ENCODE measurements at regions of chr7 and their contacts with region 1.

Region 1: DNA sequence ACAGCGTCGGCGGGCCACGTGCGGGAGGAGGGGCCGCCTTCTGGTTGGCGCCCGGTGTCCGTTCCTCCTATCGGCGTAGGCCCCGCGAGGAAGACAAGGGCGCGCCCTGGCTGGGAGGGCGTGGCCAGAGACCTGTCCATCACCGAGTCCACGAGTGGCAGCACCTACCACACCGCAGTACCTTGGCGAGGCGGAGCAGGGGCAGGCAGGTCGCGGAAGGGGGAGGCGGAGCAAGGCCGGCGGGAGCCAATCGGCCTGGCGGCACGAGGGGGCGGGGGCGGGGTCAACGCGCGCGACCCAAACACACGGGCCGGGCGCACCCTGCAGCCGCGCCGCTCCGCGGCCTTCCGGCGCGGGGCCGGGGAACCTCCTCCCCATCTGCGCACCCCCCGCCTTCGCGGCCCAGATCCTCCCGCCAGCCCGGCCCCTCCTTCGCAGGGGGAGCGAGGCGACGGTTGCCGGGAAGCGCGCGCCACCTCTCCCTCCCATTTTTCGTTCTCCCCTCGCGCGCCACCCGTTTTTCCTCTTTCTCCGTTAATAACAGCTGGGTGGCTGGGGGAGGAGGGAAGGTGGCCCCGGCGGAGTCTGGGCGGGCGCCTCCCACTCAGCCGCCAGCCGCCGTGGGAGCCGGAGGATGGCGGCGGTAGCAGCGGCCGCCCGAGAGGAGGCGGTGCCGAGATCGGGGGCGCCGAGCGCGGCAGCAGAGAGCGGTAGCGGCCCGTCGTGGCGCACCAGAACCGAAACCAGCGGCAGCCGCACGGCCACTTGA is at the start of gene ZNRF2:
- DNase-seq: peak; percentile 99
- H3K4me3 ChIP-seq: peak within 1 kb of the TSS; percentile 54 to 91 (median 59)
- H3K27ac ChIP-seq: peak within 1 kb of the TSS; percentile 93
- H3K4me1 ChIP-seq: peaks cover 9% of the 10 kb centered on the region
- H3K27me3 ChIP-seq: no peaks in the 10 kb centered on the region
- CTCF ChIP-seq: peak in 1 of 2 donors; percentile 46
- total RNA-seq, gene ZNRF2: 13.1 to 32.3 TPM

Region 2: GRCh38 chr7:30026229-30027064 is 258.0 kb before region 1 on chr7 and contains the start of gene FKBP14:
- CTCF ChIA-PET with region 1: no interaction called
- dilution Hi-C with region 1: no loop called
- in situ Hi-C with region 1: no loop called
- intact Hi-C with region 1: loop called (anchors 5 kb)
- DNase-seq: peak; percentile 99
- H3K4me3 ChIP-seq: peak within 1 kb of the TSS; percentile 79 to 84 (median 83)
- H3K27ac ChIP-seq: peak within 1 kb of the TSS; percentile 81
- H3K4me1 ChIP-seq: peaks cover 18% of the 10 kb centered on the region
- H3K27me3 ChIP-seq: no peaks in the 10 kb centered on the region
- CTCF ChIP-seq: no peak
- total RNA-seq, gene FKBP14: 29.7 to 37.4 TPM

Region 3: DNA sequence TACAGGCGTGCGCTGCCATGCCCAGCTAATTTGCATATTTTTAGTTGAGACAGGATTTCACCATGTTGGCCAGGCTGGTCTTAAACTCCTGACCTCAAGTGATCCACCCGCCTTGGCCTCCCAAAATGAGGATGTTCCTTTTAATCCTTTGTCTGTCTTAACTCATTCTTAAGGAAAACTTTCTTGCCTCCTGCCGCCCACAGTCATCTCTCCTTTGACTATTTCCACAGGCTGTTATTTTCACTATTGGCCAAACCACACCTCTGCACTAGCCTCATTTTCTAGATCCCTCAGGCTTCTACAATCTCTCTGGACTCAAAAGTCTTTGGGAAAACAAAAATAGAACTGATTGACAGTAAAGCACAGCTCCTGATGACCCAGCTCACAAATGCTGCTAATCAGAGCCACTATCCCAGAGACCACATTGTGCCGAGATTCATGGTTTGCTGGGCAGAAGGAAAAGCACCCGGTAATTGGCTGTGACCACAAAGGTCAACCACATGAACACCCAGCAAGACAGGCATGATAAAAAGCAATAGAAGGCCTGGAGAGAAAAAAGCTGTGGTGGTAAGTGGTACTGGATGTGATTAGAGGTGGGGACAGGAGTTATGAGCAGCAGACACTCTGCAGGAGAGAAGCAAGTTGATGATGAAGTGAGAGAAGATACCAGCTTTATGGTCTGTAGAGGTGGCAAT is 44.2 kb before region 1 on chr7:
- CTCF ChIA-PET with region 1: interaction called, 3 read pairs
- dilution Hi-C with region 1: no loop called
- in situ Hi-C with region 1: no loop called
- intact Hi-C with region 1: loop called (anchors 2 kb)
- DNase-seq: peak; percentile 61
- H3K4me3 ChIP-seq: no peak overlapping the region
- H3K27ac ChIP-seq: no peak overlapping the region
- H3K4me1 ChIP-seq: peaks cover 37% of the 10 kb centered on the region
- H3K27me3 ChIP-seq: no peaks in the 10 kb centered on the region
- CTCF ChIP-seq: no peak

Region 4: DNA sequence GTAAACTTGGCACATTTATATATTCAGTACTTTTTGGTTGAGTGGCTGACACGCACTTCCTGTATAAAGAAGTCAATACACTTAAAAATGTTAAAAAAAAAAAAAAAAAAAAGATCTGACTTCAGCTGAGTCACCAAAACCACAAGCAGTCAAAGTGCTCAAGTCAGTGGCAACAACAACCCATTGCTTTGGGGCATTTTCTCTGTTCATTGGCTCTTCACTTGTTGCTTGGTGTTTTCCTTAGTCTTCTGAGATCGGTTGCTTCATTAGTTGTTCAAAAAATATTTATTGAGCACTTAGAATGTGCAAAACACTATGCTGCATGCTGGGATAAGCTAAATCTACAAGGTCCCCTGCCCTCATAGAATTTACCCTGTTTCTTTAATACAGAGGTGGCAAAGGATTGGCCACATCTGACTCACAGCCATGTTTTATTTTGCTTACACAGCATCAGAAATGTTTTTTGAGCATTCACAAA is 63.6 kb after region 1 on chr7:
- CTCF ChIA-PET with region 1: no interaction called
- dilution Hi-C with region 1: no loop called
- in situ Hi-C with region 1: no loop called
- intact Hi-C with region 1: loop called (anchors 1 kb)
- DNase-seq: peak; percentile 92
- H3K4me3 ChIP-seq: peak overlapping the region in 1 of 3 experiments; percentile 41
- H3K27ac ChIP-seq: peak overlapping the region; percentile 68
- H3K4me1 ChIP-seq: peaks cover 21% of the 10 kb centered on the region
- H3K27me3 ChIP-seq: no peaks in the 10 kb centered on the region
- CTCF ChIP-seq: no peak

Region 5: GRCh38 chr7:30412810-30413504 is 128.5 kb after region 1 on chr7:
- CTCF ChIA-PET with region 1: no interaction called
- dilution Hi-C with region 1: no loop called
- in situ Hi-C with region 1: loop called (anchors 5 to 10 kb)
- intact Hi-C with region 1: no loop called
- DNase-seq: peak; percentile 78
- H3K4me3 ChIP-seq: no peak overlapping the region
- H3K27ac ChIP-seq: no peak overlapping the region
- H3K4me1 ChIP-seq: peaks cover 5% of the 10 kb centered on the region
- H3K27me3 ChIP-seq: no peaks in the 10 kb centered on the region
- CTCF ChIP-seq: peak; percentile 62 to 67